ENCODE measurements at regions of chr6 and their contacts with region 1.

Region 1: GRCh38 chr6:118810420-118811027 is 83.4 kb upstream of the ASF1A start:
- DNase-seq: no peak
- ATAC-seq: peak; percentile 82
- H3K4me3 Mint-ChIP-seq: peak overlapping the region; percentile 69
- H3K27ac Mint-ChIP-seq: peak overlapping the region; percentile 83
- H3K4me1 Mint-ChIP-seq: peaks cover 36% of the 10 kb centered on the region
- H3K27me3 Mint-ChIP-seq: no peaks in the 10 kb centered on the region
- CTCF ChIP-seq: no peak

Region 2: GRCh38 chr6:118843685-118844390 is 33.3 kb after region 1 on chr6:
- CTCF ChIA-PET with region 1: no interaction called
- POLR2A ChIA-PET with region 1: no interaction called
- intact Hi-C with region 1: loop called (anchors 2 kb)
- DNase-seq: no peak
- ATAC-seq: peak; percentile 84
- H3K4me3 Mint-ChIP-seq: no peak overlapping the region
- H3K27ac Mint-ChIP-seq: no peak overlapping the region
- H3K4me1 Mint-ChIP-seq: peaks cover 27% of the 10 kb centered on the region
- H3K27me3 Mint-ChIP-seq: no peaks in the 10 kb centered on the region
- CTCF ChIP-seq: no peak

Measured in activated B cell treated with CpG ODN at 0.5 μM for 24 hours (primary cell).